Activated naive CD4-positive, alpha-beta T cell treated with anti-CD3 and anti-CD28 coated beads, Interleukin-2, amount 10 ng/mL, durations not matched to agents 7 days and 5 days (primary cell): ENCODE measurements at regions of chr9 and their contacts with region 1.

Region 1: DNA sequence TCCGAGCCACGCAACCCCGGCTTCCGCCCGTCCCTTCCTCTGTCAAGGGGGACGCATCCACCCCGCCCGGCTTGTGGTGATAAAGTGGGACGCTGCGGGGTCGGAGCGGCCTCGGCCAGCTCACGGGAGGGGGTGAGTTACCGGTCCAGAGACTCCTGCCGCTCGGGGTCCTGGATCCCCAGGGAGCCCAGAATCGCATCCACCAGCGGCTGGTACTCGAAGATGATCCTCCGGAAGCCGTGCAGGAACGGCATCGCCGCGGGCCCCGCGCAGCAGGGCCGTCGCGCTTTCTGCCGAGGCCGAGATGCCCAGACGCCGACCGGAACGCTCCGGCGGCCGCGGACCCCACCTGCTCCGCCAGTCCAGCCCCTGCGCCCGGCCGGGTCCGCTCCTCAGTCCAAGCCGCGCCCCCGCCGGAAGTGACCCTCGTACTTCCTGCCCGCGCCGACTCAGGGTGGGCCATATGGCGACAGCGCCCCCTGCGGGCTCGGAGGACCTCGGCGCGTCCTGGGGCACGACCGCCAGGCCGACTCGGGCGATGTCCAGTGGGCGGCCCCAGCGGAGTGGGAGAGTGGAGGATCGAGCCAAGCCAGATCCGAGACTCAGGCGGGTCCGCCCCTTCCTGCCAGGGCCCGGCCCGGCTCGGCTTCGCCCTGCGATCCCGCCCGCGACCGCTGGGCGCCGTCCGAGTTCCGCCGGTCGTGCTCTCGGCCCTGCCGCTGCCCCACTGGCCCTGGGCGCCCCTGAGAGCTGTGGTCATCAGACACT is at the start of gene ASB6:
- DNase-seq: peak; percentile 94
- H3K4me3 Mint-ChIP-seq: peak within 1 kb of the TSS; percentile 72
- H3K27ac Mint-ChIP-seq: peak within 1 kb of the TSS; percentile 86
- H3K4me1 Mint-ChIP-seq: peaks cover 23% of the 10 kb centered on the region
- H3K27me3 Mint-ChIP-seq: no peaks in the 10 kb centered on the region

Region 2: GRCh38 chr9:129783516-129784361 is 141.8 kb after region 1 on chr9:
- CTCF ChIA-PET with region 1: interaction called, 12 read pairs
- DNase-seq: peak; percentile 82
- H3K4me3 Mint-ChIP-seq: no peak overlapping the region
- H3K27ac Mint-ChIP-seq: no peak overlapping the region
- H3K4me1 Mint-ChIP-seq: peaks cover 3% of the 10 kb centered on the region
- H3K27me3 Mint-ChIP-seq: peaks cover 59% of the 10 kb centered on the region